ENCODE measurements at regions of chr4 and their contacts with region 1.

Region 1: DNA sequence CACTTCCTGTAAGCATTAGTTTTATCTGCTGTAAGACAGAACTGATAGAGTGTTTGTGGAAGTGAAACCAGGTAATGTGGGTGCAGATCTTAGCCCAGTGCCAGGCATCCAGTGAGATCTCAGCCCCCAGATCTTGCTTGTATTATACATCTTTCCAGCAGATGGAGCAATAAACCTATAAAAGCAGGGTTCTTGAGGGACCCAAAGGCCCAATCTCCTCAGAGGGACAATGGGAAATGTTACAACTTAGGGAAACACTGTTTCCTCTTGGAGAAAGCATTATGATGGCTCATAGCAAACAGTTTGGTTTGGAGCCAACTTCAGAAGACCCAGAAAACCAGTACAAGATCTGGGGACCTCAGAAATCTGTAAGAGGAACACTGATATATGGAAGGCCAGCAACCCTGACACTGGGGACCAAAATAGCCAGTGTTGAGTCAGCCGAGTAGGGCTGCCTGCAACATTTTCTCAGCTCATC is 206.3 kb downstream of the SLC7A11 start:
- DNase-seq: no peak
- H3K4me3 ChIP-seq: no peak overlapping the region
- H3K27me3 ChIP-seq: no peaks in the 10 kb centered on the region
- CTCF ChIP-seq: peak; percentile 56

Region 2: DNA sequence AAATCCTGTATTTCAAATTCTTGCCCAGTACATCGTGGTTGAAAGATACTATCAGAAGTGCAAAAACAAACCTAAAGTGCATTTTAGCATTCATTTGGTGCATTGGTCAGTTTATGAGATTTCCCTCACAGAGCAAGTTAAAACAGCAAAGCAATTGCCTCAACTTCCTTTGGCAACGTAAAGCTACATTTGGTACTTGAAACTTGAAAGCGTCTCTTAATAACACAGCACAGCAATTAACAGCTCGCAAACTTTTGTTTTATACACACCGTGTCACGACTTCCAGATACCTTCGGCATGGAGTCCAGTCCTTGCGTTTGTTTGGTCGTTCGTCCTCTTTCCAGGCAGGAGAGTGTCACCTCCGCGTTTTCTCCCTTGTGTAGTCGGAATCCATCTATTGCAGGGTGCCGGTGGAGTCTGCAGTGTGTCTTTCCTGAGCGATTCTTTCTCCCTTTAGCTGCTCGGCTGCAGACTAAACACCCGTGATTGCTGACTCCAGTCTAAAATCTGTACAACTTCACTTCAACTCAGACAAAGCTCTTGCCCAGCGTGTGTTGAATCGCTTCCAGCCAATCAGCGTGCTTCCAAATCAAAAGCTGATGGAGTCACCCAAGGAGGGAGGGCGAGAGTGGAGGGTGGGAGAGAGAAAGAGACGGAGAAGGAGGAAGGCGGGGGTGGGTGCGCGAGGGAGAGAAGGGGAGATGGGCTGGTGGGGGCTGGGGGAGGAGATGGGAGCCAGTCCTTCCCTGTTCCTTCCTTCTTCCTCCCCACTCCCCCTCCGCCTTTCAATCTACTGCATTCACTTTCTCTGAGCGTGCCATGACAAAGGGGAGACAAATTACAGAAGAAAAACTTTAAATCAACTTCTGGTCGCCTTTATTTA is 503.6 kb before region 1 on chr4 and contains the start of gene PCDH18:
- CTCF ChIA-PET with region 1: no interaction called
- POLR2A ChIA-PET with region 1: no interaction called
- DNase-seq: peak; percentile 87
- H3K4me3 ChIP-seq: peak within 1 kb of the TSS; percentile 57
- H3K27me3 ChIP-seq: no peaks in the 10 kb centered on the region
- CTCF ChIP-seq: no peak
- polyA plus RNA-seq, gene PCDH18: 122 and 138 TPM in 2 replicates

Region 3: DNA sequence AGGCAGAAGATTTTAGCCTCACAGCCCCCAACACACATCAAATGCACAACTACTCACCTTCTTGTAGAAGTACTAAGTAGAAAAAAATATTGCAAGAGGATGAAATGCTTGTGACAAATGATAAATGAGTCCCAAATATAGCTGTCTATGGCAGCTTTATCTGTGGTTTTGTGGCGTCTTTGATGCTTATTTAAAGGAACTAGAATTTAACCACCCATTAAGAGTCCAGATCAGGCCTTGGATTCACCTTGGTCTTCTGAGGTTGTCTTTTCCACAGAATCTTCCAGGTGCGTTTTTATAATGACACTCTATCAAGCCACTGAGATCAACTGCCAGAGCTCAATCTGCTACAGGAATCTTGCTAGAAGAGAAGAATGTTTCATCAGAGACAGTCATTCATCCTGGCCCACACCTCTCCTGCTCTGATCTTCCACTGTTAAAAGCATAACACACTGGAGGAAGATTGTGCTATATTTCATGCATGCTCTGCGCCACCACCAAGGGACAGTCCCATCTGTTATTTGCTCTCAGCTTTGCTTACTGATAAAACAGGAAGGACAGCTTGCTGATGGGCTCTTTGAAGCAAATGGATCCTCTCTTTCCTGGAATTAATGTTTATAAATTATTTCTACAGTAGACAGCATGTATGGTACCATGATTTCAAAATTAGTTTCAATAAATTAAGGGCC is 62.2 kb after region 1 on chr4:
- CTCF ChIA-PET with region 1: interaction called, 32 read pairs
- POLR2A ChIA-PET with region 1: no interaction called
- DNase-seq: no peak
- H3K4me3 ChIP-seq: no peak overlapping the region
- H3K27me3 ChIP-seq: no peaks in the 10 kb centered on the region
- CTCF ChIP-seq: no peak

Region 4: DNA sequence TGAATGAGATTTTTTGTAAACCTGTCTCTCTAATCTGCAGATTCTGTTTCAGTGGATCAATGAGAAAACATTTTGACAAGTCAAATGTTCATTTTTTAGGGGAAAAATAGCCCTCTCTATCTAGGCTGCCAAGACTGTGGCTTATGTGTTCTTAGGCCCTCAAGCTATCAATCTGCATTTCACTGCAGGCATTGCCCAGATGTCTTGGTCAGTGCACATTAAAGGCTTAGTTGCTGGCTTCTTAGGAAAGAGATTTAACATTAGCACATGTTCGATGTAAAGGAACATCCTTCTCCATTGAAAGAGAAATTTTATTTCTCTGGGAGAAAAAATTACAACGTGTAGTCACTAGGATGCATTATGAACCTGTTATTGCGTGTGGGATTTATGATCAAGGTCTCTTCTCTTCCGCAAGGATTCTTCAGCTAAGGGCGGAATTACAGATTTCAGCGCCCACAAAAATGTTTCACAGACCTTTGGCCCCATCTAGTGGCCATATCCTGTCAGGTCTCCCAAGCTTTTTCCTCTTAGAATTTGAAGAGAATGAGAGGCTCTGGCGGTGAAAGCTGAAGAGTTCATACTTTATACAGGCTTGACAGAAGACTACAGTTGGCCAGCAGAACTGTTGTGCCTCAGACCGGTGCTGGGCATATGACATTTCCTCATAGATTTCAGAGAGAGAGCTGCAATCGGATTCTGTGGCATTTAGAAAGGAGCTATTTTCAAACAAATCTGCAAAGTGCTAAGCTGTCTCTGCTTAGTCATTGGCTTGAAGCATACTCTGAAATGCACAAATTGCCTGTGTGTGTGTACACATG is 835.1 kb after region 1 on chr4:
- CTCF ChIA-PET with region 1: interaction called, 12 read pairs
- POLR2A ChIA-PET with region 1: no interaction called
- DNase-seq: no peak
- H3K4me3 ChIP-seq: no peak overlapping the region
- H3K27me3 ChIP-seq: peaks cover 18% of the 10 kb centered on the region
- CTCF ChIP-seq: peak; percentile 78

Region 5: DNA sequence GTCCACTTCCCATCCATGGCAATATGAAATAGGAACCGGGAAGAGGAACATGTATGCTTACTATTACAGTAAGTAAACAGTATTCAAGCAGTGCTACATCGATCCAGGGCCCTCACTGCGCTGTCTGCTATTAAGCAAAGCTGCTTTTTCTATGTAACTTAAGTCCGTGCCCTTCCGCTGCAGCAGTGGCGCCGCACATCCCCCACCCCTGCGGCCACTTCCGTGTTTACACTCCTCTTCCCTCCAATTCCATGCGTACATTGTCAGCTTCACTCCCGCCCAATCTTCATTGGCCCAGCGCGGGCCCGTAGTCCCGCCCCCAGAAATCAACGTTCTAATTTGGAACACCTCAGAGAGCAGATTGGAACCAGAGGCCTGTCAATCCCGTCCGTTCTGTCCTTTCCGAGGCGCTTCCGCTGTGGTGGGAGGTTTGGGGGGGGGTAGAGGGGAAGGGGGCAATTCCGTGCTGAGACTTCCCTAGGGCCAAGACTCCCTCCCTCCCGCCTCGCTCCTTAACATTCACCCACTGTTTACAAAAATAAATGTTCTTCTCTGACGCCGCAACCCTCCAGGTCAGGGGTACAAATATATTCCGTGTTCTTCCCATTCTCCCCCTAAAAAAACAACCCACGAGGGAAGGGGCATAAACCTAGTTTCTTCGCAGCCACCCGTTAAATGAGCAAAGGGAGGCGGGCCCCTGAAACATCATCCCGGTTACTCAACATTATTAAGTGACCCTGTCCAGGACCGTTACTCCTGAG is 1047.1 kb after region 1 on chr4:
- CTCF ChIA-PET with region 1: no interaction called
- POLR2A ChIA-PET with region 1: interaction called, 11 read pairs
- DNase-seq: peak; percentile 95
- H3K4me3 ChIP-seq: peak overlapping the region; percentile 73
- H3K27me3 ChIP-seq: no peaks in the 10 kb centered on the region
- CTCF ChIP-seq: no peak